Natural killer cell (primary cell): ENCODE measurements at regions of chr17 and their contacts with region 1.

Region 1: GRCh38 chr17:27760069-27760885 is 40.1 kb downstream of the NOS2 start:
- DNase-seq: peak; percentile 66 to 78
- ATAC-seq: peak in 2 of 3 donors; percentile 59 to 73
- H3K4me3 ChIP-seq: no peak overlapping the region
- H3K4me3 Mint-ChIP-seq: no peak overlapping the region
- H3K27ac ChIP-seq: no peak overlapping the region
- H3K27ac Mint-ChIP-seq: no peak overlapping the region
- H3K4me1 ChIP-seq: no peaks in the 10 kb centered on the region
- H3K4me1 Mint-ChIP-seq: no peaks in the 10 kb centered on the region
- H3K27me3 ChIP-seq: no peaks in the 10 kb centered on the region
- H3K27me3 Mint-ChIP-seq: peaks cover 0 to 3% of the 10 kb centered on the region in 2 donors
- CTCF ChIP-seq: peak; percentile 91

Region 2: DNA sequence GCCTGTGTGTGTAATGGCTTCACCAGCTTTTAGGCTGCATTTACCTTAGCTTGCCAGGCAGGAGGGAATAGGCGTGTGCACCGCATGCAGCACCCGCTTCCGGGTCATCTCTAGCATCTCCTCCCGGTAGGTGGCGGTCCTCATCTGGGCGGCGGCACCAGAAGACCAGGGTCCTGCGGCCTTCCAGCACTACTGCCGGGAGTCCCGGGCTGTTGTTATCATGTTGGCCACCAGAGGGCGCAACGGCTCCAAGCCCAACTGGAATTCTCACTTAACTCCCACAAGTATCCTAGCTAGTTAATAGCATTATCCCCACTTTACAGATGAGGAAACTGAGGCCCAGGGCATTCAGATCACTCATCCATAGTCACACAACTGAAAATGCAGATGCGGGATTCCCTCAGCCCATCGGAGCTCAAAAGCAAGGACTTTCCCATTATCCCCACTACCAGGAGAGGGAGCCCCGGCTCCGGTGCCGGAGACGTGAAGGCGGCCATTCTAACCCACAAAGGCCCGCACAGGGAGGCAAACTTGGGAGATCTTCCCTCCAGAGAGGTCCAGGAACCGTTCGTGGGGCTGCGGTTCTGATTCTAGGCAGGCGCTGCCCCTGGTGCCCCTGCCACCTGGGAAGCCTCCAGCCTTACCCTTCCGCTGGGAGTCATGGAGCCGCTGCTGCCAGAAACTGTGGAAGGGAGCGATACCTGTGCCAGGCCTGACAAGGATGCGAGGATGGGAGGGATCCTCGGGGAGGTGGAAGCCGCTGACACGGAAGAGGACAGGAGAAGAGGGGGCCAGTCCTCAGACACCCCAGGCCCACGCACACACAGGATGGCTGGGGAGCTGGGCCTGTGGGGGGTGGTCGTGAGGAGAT is 105.4 kb before region 1 on chr17:
- intact Hi-C with region 1: loop called (anchors 2 kb)
- DNase-seq: peak; percentile 60 to 80
- ATAC-seq: peak; percentile 60 to 73 (median 69)
- H3K4me3 ChIP-seq: no peak overlapping the region
- H3K4me3 Mint-ChIP-seq: no peak overlapping the region
- H3K27ac ChIP-seq: no peak overlapping the region
- H3K27ac Mint-ChIP-seq: no peak overlapping the region
- H3K4me1 ChIP-seq: peaks cover 7% of the 10 kb centered on the region
- H3K4me1 Mint-ChIP-seq: peaks cover 6% of the 10 kb centered on the region in 2 donors
- H3K27me3 ChIP-seq: no peaks in the 10 kb centered on the region
- H3K27me3 Mint-ChIP-seq: no peaks in the 10 kb centered on the region
- CTCF ChIP-seq: peak; percentile 93

Region 3: DNA sequence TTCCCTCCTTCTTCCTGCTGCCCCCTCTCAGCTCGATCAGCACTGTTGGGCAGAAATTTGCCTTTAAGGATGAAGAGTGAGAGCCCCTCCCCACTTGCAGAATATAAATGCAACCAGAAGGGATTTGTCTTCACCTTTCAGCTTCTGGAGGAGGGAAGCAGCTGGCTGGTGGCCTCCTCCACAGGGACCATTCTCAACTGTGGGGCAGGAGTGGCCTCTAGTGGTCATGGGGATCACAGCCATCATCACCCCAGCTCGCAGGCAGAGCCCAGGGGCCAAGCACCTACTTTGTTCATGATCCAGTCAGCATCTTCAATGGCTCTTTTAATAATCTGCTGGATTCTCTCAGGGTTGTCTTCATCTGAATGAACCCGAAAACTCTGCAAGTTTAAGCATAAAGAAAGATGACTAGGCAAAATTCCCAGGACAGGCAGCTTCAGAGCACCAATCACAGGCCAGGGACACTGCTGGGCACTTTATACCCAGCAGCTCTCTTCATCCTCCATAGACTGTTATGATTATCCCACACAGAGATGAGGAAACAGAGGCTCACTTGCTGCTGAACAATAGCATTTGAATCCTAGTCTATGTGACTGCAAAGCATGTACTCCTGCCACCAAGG is 119.8 kb after region 1 on chr17:
- intact Hi-C with region 1: loop called (anchors 1 kb)
- DNase-seq: peak; percentile 45 to 79
- ATAC-seq: peak; percentile 75 to 98 (median 87)
- H3K4me3 ChIP-seq: no peak overlapping the region
- H3K4me3 Mint-ChIP-seq: no peak overlapping the region
- H3K27ac ChIP-seq: no peak overlapping the region
- H3K27ac Mint-ChIP-seq: no peak overlapping the region
- H3K4me1 ChIP-seq: no peaks in the 10 kb centered on the region
- H3K4me1 Mint-ChIP-seq: no peaks in the 10 kb centered on the region
- H3K27me3 ChIP-seq: no peaks in the 10 kb centered on the region
- H3K27me3 Mint-ChIP-seq: no peaks in the 10 kb centered on the region
- CTCF ChIP-seq: peak; percentile 76